IMR-90 (cell line): ENCODE measurements at regions of chr11 and their contacts with region 1.

Region 1: DNA sequence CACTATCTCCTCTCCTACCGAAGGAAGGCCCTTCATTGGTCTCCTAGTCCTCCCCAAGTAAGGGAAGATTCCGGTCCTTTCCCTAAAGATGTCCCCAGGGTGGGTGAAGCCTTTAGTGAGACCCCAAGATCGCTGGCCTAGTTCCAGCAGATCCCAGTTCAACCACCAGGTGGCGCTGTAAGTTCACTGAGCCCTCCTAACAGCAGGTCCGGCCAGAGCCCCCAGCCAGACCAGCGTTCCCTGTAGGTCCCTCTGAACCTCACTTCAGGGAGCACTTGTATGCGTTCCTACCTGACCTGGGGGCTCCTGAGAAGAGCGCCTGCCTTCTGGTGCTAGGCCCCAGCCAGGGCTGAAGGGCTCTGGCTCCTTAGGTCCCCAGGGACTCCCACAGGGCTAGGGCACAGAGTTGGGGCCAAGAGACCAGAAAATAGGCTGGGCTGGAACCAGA is 38.1 kb downstream of the LMO1 start:
- DNase-seq: peak; percentile 52
- ATAC-seq: peak; percentile 79
- H3K4me3 ChIP-seq: no peak overlapping the region
- H3K27ac ChIP-seq: no peak overlapping the region
- H3K4me1 ChIP-seq: no peaks in the 10 kb centered on the region; the same call in 1 of the 2 replicates
- H3K27me3 ChIP-seq: peaks cover 22% of the 10 kb centered on the region
- CTCF ChIP-seq: peak; percentile 86
- POLR2A ChIP-seq: no peak
- RAD21 ChIP-seq: peak; percentile 85

Region 2: DNA sequence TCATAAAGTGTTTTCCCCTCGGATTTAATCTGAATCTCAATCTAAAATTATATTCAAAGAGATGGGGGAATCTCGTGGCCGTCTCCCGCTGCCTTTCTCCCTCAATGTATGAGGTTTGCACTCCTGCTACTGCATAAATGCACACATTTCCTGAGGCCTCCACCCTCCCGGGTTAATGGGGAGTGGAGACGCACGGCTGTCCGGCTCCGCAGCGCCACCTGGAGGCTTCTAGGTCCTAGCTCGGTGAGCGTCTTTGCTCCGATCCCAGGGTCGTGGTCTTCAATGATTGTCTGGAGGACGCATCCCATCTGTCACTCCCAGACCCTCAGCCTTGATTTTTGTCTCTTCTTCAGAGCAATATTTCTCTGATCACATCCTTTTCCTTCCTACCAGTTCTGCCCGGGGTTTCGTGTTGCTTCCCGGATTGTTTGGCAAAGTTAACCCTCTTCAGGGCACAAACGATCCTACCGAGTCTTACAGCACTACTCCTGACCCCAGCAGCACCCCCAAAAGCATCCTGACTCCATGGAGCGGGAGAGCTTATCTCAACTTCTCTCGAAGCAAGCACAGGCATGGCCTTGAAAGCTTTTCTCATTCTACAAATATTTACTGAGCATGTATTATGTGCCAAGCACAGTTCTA is 38.3 kb after region 1 on chr11 and contains the start of gene LMO1:
- CTCF ChIA-PET with region 1: no interaction called
- POLR2A ChIA-PET with region 1: no interaction called
- dilution Hi-C with region 1: no loop called
- in situ Hi-C with region 1: no loop called
- intact Hi-C with region 1: loop called (anchors 1 kb)
- DNase-seq: peak; percentile 62
- ATAC-seq: peak; percentile 81
- H3K4me3 ChIP-seq: peak within 1 kb of the TSS; percentile 27
- H3K27ac ChIP-seq: no peak within 1 kb of the TSS
- H3K4me1 ChIP-seq: no peaks in the 10 kb centered on the region; the same call in 1 of the 2 replicates
- H3K27me3 ChIP-seq: peaks cover 84% of the 10 kb centered on the region
- CTCF ChIP-seq: peak; percentile 77
- POLR2A ChIP-seq: no peak
- RAD21 ChIP-seq: peak; percentile 58
- total RNA-seq, gene LMO1: not detected in 2 replicates

Region 3: DNA sequence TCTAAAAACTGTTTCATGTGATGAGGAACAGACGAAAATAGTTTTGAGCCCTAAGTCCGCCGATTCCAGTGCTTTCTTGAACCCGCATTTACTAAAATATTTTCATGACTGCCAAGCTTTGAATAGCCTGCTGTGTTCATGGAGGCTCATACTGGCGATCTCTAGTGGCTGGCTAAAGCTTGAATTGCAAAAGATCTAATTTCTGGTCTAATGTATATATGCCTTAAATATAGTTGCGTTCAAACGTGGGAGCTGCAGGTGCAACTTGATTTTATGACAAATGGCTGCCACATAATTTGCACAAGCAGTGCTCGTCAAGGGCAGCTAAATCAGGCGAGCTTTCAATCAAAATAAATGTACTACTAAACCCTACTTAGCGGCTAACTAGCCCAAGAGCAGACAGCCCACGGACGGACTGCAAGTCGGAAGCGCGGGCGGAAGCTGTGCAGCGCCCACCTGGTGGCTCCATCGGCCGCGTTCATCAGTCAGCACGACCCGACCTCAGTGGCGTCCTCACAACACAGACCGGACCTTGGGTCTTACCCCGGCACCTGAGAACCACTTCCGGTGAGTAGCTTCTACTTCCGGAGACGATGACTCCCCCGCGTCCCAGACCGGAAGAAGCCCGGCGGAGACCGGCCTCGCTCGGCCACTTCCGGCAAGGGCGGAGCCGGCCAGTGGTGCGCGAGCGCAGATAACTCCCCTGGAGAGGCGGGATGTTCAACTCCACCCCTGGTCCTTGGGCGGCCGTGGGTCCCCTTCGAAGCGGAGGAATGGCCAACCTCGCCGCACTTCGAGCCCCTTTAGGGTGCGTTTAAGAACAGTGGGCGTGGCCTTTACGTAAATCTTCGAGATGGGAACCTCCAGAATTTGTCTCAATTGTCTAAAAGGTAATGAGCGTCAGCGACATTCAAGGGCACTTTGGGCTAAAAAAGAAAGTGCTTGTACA is 463.1 kb after region 1 on chr11:
- CTCF ChIA-PET with region 1: no interaction called
- POLR2A ChIA-PET with region 1: no interaction called
- dilution Hi-C with region 1: no loop called
- in situ Hi-C with region 1: no loop called
- intact Hi-C with region 1: loop called (anchors 10 kb)
- DNase-seq: peak; percentile 96
- ATAC-seq: peak; percentile 89
- H3K4me3 ChIP-seq: peak overlapping the region; percentile 52
- H3K27ac ChIP-seq: peak overlapping the region; percentile 77
- H3K4me1 ChIP-seq: peaks cover 7% of the 10 kb centered on the region
- H3K27me3 ChIP-seq: no peaks in the 10 kb centered on the region
- CTCF ChIP-seq: peak; percentile 20; the same call in 1 of the 2 replicates
- POLR2A ChIP-seq: peak; percentile 80
- RAD21 ChIP-seq: peak; percentile 40

Region 4: DNA sequence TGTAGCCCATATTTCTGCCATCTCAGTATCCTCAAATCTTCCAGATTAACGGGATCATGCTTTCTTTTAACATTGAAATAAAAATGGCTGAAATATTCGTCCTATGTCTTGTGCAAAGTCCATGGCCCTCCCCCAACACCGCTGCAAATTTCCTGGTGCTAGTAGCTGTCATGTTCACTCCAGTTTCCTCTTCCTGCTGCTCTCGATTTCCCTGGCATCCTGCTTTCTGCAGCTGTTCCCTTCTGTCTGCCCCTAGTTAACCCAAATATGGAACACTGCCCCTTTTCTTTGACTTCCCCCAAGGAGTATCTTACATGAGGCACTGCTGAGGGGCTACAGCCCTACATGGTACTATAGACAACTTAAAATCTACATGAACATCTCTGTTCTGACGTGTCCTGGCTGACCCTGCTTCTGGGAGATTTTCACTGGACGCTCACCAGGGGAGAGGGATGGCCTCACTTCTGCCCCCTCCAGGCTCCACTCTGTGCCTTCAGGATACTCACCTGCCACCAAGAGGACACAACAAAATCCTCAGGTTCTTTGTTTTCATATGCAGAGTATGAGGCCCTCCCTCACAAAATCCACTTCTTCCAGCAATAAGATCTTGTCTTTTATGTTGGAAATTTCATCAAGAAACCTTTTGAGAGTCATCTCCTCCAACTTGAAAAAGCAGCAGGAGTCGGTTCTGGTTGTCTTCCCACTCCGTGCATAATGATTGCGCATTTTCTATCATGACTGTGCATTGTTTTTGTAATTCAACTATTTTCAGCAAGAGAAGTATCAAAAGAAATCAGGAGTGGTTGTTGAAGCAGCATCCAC is 895.3 kb after region 1 on chr11:
- CTCF ChIA-PET with region 1: no interaction called
- POLR2A ChIA-PET with region 1: no interaction called
- dilution Hi-C with region 1: no loop called
- in situ Hi-C with region 1: loop called (anchors 25 kb)
- intact Hi-C with region 1: no loop called
- DNase-seq: no peak
- ATAC-seq: peak; percentile 48; the same call in 1 of the 2 replicates
- H3K4me3 ChIP-seq: no peak overlapping the region
- H3K27ac ChIP-seq: no peak overlapping the region
- H3K4me1 ChIP-seq: no peaks in the 10 kb centered on the region
- H3K27me3 ChIP-seq: no peaks in the 10 kb centered on the region
- CTCF ChIP-seq: peak; percentile 22; the same call in 1 of the 2 replicates
- POLR2A ChIP-seq: no peak
- RAD21 ChIP-seq: 0 out of 2 replicates have a peak, but pooled peaks have one; percentile 13